RWPE1 (cell line): ENCODE measurements at regions of chr13 and their contacts with region 1.

Region 1: DNA sequence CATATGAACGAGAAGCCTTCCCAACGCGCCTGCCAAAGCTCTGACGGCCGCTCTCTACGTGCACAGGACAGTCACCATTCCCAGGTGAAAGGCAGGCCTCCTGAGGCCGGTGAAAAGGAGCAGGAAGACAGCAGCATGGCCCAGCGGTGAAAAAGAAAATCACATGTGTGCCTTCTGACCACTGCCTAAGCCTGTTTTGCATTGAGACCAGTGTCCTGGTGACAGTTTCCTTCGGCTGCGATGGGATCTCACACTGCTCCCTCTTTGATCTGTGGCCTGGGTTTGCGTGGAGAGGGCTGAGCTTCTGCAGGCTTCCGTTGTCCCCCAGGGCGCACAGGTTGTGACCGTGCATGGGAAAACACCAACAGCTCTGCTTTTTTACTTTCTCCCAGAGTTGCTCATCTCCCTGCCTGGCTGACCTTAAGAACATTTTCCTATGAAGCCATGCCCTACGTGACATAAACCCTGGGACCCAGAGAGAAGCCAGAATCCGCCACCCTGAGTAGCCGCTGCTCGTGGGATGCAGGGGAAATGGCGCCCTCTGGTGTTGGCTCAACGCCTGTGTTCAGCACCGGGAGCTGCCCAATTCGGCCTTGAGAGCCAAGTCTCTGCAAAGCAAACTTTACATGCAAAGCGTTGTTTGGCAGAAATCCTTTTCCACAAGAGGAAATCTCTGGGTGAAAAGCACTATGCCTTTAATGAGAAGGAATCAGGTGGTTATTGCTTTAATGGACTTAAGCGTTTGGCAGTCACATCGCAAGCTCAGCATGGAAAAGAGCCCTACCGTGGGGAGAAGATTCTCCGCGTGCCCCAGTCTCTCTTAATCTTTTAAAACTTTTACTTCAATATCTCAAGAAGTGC is 112.2 kb upstream of the GPR12 start:
- DNase-seq: peak; percentile 42
- H3K27ac ChIP-seq: no peak overlapping the region
- CTCF ChIP-seq: peak; percentile 61

Region 2: DNA sequence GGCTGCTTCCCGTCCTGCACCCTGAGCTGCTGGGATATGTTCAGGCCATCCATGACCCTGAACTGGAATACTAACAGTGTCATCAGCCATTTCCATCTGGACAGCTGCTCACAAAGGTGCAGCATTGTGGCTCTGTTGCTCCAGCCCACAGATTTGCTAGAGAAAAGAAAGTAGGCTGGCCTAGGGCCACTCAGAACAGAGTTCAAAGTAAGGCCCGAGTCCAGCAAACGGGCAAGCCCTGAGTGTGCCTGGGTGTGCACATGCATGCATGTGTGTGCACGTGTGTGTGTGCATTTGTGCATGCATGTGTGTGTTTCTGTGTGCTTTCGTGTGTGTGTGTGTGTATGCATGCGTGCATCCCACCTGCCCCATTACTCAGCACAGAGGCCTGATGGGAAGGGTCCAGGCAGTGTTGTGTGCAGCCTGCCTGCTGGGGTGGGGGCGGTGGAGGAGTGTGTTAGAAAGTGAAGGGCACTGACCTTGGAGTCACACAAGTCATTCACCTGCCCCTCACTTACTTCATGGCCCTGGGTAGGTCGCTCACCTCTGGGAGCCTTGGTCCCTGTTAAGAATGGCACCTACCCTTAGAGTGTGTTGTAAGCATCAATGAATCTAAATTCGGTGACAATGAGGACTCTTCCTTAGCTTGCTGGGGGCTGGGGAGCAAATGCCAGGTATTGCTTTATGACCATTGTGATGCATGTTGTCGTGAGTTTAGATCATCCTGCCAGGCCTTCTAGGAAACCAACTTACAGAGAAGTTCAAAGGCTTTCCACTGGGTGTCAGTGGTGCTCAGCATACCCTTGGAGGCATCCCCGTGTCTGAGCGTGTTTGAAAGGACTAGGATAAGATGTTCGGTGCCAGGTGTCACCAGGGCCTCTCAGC is 165.4 kb before region 1 on chr13:
- CTCF ChIA-PET with region 1: interaction called, 27 read pairs
- POLR2A ChIA-PET with region 1: no interaction called
- DNase-seq: peak; percentile 49
- H3K27ac ChIP-seq: no peak overlapping the region
- CTCF ChIP-seq: peak; percentile 32; the same call in 1 of the 2 replicates

Region 3: DNA sequence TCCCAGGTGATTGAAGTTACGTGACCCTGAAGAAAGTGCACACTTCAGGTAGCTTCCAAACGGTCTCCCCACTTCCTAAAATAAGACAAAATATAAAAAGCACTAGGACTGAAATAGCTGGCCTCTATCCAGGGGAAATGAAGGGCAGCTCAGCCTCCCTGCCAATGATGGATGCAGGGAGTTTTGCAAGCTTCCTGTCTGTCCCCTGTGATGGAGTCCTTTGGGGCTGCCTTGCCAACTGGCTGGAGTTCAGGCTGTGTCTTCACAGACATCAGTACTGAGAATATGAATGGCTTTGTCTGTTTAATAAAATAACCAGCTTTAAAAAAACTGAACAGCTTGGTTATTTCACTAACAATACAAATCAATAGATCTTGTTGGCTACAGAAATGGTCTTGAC is 10.8 kb before region 1 on chr13:
- CTCF ChIA-PET with region 1: interaction called, 14 read pairs
- POLR2A ChIA-PET with region 1: no interaction called
- DNase-seq: no peak
- H3K27ac ChIP-seq: no peak overlapping the region
- CTCF ChIP-seq: no peak